ENCODE measurements at regions of chr6 and their contacts with region 1.

Region 1: DNA sequence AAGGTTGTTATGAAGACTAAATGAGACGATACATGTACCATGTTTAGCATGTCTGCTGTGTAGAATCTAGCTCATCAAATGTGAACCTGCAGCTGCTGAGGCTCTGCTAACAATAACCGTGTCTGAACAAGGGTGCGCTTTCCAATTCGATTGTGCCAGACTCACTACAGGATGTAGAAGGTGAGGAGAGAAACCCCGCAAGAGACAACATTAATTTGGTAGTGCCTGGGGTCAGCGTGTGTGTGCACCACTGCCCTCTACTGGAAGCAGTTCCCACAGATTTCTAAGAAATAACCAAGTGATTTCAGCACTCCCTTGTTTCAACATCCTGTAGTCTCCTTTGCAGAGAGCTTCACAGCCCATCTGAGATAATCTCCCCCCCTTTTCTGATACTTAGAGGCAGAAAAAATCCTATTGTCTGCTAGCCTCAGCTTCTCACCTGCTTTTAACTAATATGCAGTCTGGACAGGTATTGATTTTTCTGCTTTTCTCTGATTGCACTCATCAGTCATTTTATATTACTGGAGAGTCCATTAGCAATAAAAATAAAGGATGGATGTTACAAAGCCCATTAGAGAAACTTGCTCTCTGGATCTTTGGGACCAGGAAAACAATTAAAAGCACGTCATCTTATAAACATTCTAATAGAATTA is 96.7 kb upstream of the BACH2 start:
- DNase-seq: peak; percentile 28 to 42
- ATAC-seq: peak; percentile 75 to 95
- H3K4me3 ChIP-seq: no peak overlapping the region
- H3K27ac ChIP-seq: no peak overlapping the region
- H3K4me1 ChIP-seq: no peaks in the 10 kb centered on the region
- H3K27me3 ChIP-seq: no peaks in the 10 kb centered on the region
- CTCF ChIP-seq: peak; percentile 70 to 85 (median 79)
- POLR2A ChIP-seq: no peak

Region 2: DNA sequence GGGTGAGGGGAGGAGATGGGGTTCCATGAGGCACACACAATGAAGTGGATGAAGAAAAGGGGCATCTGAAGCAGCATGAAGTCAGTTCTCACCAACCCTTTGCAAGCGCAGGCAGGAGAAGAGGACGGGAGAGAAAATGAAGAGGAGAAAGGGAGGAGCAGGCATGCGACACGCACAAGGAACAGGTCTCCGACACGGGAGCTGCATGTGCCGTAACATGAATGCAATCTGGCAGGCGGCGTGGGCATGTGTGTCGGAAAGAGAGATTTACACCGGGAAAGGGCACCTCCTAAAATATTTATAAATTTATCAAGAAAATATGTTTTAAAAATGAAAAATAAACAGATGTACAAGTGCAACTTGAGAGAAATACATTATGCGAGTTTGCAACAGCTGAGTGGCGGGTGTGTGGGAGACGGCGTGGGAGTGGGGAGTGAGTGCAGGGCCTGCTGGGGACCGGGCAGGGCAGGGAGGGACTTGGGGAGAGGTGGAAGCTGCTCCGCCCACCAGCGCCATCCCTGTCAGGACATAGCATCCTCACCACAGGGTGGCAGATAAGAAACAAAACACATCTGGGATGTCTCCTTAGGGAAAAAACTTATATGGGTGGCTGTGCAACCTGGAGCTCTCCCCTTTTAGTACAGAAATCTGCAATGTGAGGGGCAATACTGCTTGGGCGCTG is 458.5 kb before region 1 on chr6:
- in situ Hi-C with region 1: loop called (anchors 10 kb)
- intact Hi-C with region 1: loop called (anchors 1 kb)
- DNase-seq: no peak
- ATAC-seq: no peak
- H3K4me3 ChIP-seq: no peak overlapping the region
- H3K27ac ChIP-seq: no peak overlapping the region
- H3K4me1 ChIP-seq: no peaks in the 10 kb centered on the region
- H3K27me3 ChIP-seq: no peaks in the 10 kb centered on the region
- CTCF ChIP-seq: no peak
- POLR2A ChIP-seq: no peak

Region 3: DNA sequence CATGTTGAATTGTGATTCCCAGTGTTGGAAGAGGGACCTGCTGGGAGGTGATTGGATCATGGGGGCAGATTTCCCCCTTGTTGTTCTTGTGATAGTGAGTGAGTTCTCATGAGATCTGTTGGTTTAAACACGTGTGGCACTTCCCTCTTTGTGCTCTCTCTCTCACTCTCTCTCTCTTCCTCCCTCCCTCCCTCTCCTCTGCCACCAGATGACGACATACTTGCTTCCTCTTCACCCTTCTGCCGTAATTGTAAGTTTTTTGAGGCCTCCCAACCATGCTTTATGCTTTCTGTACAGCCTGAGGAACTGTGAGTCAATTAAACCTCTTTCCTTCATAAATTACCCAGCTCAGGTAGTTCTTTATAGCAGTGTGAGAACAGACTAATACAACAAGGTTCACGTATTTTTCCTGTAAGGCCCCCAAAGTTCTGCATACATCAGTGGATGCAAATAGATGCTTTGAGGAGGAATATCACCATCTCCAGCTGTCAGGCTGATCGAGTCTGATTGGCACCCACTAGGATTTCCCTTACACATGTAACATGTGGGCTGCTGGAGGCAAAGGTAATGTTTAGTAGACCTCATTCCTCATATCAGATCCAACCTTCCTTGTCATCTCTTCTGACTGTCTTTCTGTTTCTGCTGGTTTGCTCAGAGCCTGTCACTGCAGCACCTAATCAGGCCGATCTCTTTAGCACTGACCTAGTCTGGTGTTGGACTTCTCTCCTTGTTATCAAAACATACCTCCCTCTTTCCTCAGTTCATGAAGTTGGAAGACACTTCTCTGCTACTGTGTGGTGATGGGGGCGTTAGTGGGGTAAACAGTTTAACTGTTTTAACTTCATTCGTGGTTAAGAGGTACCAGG is 42.4 kb before region 1 on chr6:
- in situ Hi-C with region 1: no loop called
- intact Hi-C with region 1: no loop called
- DNase-seq: peak in 1 of 2 donors; percentile 16
- ATAC-seq: no peak
- H3K4me3 ChIP-seq: no peak overlapping the region
- H3K27ac ChIP-seq: no peak overlapping the region
- H3K4me1 ChIP-seq: no peaks in the 10 kb centered on the region
- H3K27me3 ChIP-seq: no peaks in the 10 kb centered on the region
- CTCF ChIP-seq: no peak
- POLR2A ChIP-seq: no peak